ENCODE measurements at regions of chr2 and their contacts with region 1.

Region 1: GRCh38 chr2:54290383-54291025 is 34.5 kb upstream of the TSPYL6 start:
- DNase-seq: no peak
- H3K4me3 ChIP-seq: no peak overlapping the region
- H3K27ac ChIP-seq: no peak overlapping the region
- H3K4me1 ChIP-seq: no peaks in the 10 kb centered on the region
- CTCF ChIP-seq: no peak

Region 2: GRCh38 chr2:54133056-54133455 is 157.4 kb before region 1 on chr2:
- CTCF ChIA-PET with region 1: no interaction called
- POLR2A ChIA-PET with region 1: no interaction called
- intact Hi-C with region 1: no loop called
- DNase-seq: no peak
- H3K4me3 ChIP-seq: no peak overlapping the region
- H3K27ac ChIP-seq: no peak overlapping the region
- H3K4me1 ChIP-seq: no peaks in the 10 kb centered on the region
- CTCF ChIP-seq: no peak

Region 3: GRCh38 chr2:54279385-54279784 is 11.1 kb before region 1 on chr2:
- CTCF ChIA-PET with region 1: no interaction called
- POLR2A ChIA-PET with region 1: interaction called, 10 read pairs
- intact Hi-C with region 1: no loop called
- DNase-seq: no peak
- H3K4me3 ChIP-seq: no peak overlapping the region
- H3K27ac ChIP-seq: no peak overlapping the region
- H3K4me1 ChIP-seq: peaks cover 7% of the 10 kb centered on the region
- CTCF ChIP-seq: no peak; the same call in 1 of the 2 replicates

Region 4: DNA sequence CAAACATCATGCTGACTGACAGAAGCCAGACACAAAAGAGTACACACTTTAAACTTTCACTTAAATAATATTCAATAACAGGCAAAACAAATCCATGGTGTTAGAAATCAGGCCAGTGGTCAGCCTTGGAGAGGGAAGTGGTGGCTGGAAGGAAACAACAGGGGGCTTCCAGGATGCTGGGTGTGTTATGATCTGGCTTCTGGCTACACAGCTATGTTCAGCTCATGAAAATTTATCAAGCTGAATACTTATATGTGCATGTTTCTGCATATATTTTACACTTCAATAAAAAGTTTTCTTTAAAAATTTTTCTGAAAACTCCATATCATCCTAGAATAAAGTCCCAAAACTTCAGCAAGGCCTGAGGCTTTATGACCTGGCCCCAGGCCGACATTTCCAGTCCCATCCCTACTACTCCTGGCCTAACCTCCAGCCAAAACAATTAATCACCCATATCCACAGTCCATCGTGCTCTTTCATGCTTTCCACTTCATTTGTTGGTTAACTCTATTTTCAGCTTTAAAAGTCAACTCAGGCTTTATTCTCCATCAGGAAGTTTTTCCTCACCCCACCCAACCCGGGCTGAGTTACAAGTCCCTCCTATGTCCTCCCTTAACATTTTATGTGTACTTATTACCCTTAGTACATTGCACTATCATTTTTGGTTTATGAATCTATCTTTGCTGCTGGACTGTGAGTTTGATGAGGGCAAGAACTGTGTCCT is 137.8 kb after region 1 on chr2:
- CTCF ChIA-PET with region 1: no interaction called
- POLR2A ChIA-PET with region 1: no interaction called
- intact Hi-C with region 1: no loop called
- DNase-seq: no peak
- H3K4me3 ChIP-seq: no peak overlapping the region
- H3K27ac ChIP-seq: no peak overlapping the region
- H3K4me1 ChIP-seq: peaks cover 9% of the 10 kb centered on the region
- CTCF ChIP-seq: no peak

Measured in OCI-LY7 (cell line).